ENCODE measurements at regions of chr11 and their contacts with region 1.

Region 1: GRCh38 chr11:842370-843002 is at the starts of genes POLR2L and TSPAN4:
- DNase-seq: peak; percentile 86
- H3K4me3 ChIP-seq: peak within 1 kb of the TSS; percentile 90 to 98 (median 93)
- H3K27ac ChIP-seq: peak within 1 kb of the TSS; percentile 75
- H3K4me1 ChIP-seq: peaks cover 71% of the 10 kb centered on the region
- H3K27me3 ChIP-seq: no peaks in the 10 kb centered on the region
- CTCF ChIP-seq: no peak
- total RNA-seq, gene POLR2L: 60.0 to 193 TPM
- total RNA-seq, gene TSPAN4: 50.3 to 81.7 TPM

Region 2: GRCh38 chr11:777288-778255 is 64.9 kb before region 1 on chr11 and contains the start of gene GATD1:
- CTCF ChIA-PET with region 1: no interaction called
- dilution Hi-C with region 1: loop called (anchors 5 kb)
- in situ Hi-C with region 1: no loop called
- intact Hi-C with region 1: no loop called
- DNase-seq: peak; percentile 84
- H3K4me3 ChIP-seq: peak within 1 kb of the TSS; percentile 91 to 98 (median 96)
- H3K27ac ChIP-seq: peak within 1 kb of the TSS; percentile 63
- H3K4me1 ChIP-seq: peaks cover 58% of the 10 kb centered on the region
- H3K27me3 ChIP-seq: no peaks in the 10 kb centered on the region
- CTCF ChIP-seq: no peak
- total RNA-seq, gene GATD1: 47.0 to 78.2 TPM

Region 3: GRCh38 chr11:809287-810039 is 33.0 kb before region 1 on chr11 and contains the start of gene RPLP2:
- CTCF ChIA-PET with region 1: no interaction called
- dilution Hi-C with region 1: loop called (anchors 5 kb)
- in situ Hi-C with region 1: no loop called
- intact Hi-C with region 1: loop called (anchors 5 kb)
- DNase-seq: peak; percentile 97
- H3K4me3 ChIP-seq: peak within 1 kb of the TSS; percentile 86 to 94 (median 91)
- H3K27ac ChIP-seq: peak within 1 kb of the TSS; percentile 93
- H3K4me1 ChIP-seq: peaks cover 22% of the 10 kb centered on the region
- H3K27me3 ChIP-seq: no peaks in the 10 kb centered on the region
- CTCF ChIP-seq: no peak
- total RNA-seq, gene RPLP2: 135 to 1,487 TPM

Region 4: GRCh38 chr11:870127-870413 is 27.6 kb after region 1 on chr11:
- CTCF ChIA-PET with region 1: no interaction called
- dilution Hi-C with region 1: no loop called
- in situ Hi-C with region 1: no loop called
- intact Hi-C with region 1: no loop called
- DNase-seq: no peak
- H3K4me3 ChIP-seq: no peak overlapping the region
- H3K27ac ChIP-seq: no peak overlapping the region
- H3K4me1 ChIP-seq: no peaks in the 10 kb centered on the region
- H3K27me3 ChIP-seq: no peaks in the 10 kb centered on the region
- CTCF ChIP-seq: peak in 1 of 2 donors; percentile 10

Region 5: DNA sequence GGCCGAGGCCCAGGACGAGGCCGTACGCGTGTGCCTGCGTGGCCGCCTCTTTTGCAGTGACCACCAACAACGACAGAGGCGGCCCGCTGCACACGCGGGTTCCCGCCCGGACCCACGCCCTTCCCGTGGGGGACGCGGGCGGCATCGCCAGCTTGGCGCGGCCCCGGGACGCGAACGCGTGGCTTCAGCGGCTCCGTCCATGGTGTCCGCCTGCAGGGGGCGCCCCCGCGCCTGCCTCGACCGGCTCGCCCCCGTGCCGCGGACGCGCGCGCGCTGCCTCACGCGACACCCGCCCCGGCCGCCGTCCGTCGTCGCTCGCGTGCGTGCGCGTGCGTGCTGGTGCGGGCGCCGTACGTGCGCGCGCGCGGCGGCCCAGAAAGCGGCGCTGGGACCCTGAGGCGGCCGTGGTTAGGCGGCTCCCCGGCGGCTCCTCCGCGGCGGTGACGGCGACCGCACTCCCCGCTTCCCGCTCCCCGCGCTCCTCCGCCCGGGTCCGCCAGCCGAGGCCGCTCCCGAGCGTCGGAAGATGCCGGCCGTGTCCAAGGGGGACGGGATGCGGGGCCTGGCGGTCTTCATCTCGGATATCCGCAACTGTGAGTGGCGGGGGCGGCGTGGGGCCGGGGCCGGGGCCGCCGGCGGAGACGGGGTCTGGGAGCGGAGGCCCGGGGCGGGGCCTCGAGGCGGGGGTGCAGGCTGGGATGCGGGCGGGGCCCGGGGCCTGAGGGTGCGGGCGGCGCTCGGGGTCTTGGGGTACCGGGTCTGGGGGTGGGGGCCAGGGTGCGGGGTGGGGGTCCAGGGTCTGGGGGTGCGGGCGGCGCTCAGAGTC is 83.2 kb after region 1 on chr11 and contains the start of gene AP2A2:
- CTCF ChIA-PET with region 1: no interaction called
- dilution Hi-C with region 1: no loop called
- in situ Hi-C with region 1: no loop called
- intact Hi-C with region 1: loop called (anchors 10 kb)
- DNase-seq: peak; percentile 81
- H3K4me3 ChIP-seq: peak within 1 kb of the TSS; percentile 72 to 82 (median 78)
- H3K27ac ChIP-seq: peak within 1 kb of the TSS; percentile 29
- H3K4me1 ChIP-seq: peaks cover 6% of the 10 kb centered on the region
- H3K27me3 ChIP-seq: no peaks in the 10 kb centered on the region
- CTCF ChIP-seq: peak; percentile 39 to 57
- total RNA-seq, gene AP2A2: 66.6 to 66.7 TPM